ENCODE measurements at regions of chr21 and their contacts with region 1.

Region 1: GRCh38 chr21:34603002-34603709 is 11.8 kb downstream of the RCAN1 start:
- H3K4me3 Mint-ChIP-seq: no peak overlapping the region
- H3K27ac Mint-ChIP-seq: no peak overlapping the region
- H3K4me1 Mint-ChIP-seq: peaks cover 12% of the 10 kb centered on the region
- H3K27me3 Mint-ChIP-seq: no peaks in the 10 kb centered on the region

Region 2: DNA sequence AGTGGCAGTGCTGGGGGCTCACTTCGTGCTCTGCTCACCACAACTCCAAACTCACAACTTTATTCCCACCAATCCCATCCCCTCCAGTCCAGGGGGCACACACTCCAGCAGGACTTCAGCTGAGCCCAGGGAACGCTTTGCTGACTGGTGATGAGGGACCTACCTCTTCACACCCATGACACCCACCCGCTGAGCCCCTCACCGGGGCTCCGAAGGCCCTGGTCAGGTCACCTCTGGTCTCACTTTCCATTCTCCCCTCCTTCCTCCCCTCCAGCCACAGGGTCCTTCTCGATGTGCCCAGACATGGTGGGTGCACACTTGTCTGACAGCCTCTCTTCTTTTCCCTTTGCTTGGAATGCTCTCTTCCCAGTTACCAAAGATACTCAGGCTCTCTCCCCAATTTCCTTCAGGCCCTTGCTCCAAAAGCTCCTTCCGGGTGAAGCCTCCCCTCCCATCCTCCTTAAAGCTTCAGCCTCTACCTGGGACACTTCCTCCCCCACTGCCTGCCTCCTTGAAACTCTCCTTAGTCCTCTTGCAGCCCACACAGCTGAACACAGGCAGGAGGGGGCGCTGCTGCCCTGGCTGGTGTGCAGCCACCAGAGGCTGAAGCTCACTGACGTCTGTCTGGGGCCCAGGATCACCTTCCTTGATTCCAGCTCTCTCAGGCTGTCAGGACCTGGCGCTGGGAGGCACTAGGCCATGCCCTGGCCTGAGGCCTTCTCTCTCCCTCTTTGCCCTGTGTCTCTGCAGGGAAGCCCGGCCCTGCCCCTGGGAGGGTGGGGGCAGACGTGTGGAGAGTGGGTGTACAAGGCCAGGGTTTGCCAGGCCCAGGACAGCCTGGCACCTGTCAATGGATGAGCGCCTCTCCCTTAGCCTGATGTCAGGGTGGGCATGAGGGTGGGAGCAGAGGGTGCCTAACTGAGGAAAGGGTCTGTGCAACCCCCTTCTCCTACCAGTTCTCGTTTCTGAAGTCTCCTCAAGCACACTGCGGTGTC is 92.7 kb before region 1 on chr21:
- intact Hi-C with region 1: loop called (anchors 1 kb)
- H3K4me3 Mint-ChIP-seq: peak overlapping the region; percentile 77
- H3K27ac Mint-ChIP-seq: peak overlapping the region; percentile 64
- H3K4me1 Mint-ChIP-seq: peaks cover 58% of the 10 kb centered on the region
- H3K27me3 Mint-ChIP-seq: no peaks in the 10 kb centered on the region

Region 3: DNA sequence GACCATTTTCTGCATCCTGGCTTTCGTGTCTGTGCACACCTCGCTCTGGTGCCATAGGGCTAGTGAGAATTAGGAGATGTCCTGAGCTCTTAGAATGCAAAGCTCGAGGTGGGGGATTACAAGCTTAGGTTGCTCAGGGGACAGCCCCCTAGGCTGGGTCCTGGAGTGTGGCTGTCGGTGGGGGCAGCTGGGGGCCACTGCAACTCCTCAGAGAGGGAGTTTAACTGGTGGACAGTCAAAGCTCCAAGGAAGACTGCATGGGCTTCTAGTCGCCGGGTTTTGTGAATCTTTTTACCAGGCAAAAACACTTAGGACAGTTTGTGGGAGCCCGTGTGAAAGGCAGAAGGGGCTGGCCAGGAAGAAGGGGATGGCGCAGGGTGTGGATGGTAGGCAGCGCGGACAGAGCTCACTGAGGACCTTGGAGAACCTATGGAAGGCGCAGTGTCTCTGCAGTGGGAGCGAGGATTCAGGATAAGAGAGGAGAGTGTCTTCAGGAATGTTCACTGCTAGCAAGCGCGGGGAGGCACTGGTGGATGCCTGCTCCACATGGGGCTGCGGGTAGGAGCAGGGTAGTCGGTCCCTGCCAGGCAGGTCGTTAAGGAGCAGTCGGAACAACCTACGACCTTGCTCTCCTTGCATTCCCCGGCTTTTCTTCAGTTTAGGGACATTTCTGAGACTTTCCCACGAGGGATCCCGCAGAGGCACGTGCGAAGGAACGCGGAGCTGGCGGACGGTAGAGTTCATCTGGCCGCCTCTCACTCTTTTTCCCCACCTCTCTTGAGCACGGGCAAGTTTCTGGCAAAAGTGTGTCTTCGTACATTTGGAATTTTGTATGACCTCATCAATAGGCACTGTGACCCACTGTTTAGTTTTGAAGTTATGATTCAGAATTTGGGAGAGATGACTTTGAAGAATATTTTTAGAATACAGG is 78.2 kb before region 1 on chr21:
- intact Hi-C with region 1: loop called (anchors 5 kb)
- H3K4me3 Mint-ChIP-seq: no peak overlapping the region
- H3K27ac Mint-ChIP-seq: no peak overlapping the region
- H3K4me1 Mint-ChIP-seq: peaks cover 53% of the 10 kb centered on the region
- H3K27me3 Mint-ChIP-seq: no peaks in the 10 kb centered on the region

Region 4: DNA sequence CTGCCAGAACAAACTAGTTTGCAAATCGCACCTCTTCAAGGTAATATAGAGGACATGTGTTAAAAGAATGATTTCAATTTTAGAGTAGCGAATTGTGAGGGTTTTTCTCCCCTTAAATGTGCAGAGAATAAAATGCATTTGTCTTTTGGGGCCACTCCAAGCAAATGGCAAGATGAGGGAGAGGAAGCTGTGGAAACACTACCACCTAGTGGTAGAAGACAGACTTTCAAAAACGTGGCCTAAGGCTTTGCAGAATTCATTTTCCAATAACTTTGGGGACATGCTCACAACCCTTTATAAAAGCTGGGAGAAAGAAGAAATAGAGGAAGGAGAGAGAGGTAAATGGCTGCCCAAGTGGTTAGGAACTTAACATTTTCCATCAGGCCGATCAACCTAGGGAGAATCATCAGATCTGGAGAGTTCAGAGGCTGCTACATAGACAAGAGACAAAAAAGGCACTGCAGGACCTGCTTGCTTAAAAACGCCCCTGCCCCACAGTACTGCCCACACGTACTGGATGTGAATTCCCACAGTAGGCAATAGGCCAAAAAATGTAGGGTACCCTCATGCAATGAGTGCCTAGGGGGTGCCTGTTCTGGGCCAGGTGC is 27.5 kb after region 1 on chr21:
- intact Hi-C with region 1: loop called (anchors 2 kb)
- H3K4me3 Mint-ChIP-seq: no peak overlapping the region
- H3K27ac Mint-ChIP-seq: no peak overlapping the region
- H3K4me1 Mint-ChIP-seq: peaks cover 6% of the 10 kb centered on the region
- H3K27me3 Mint-ChIP-seq: peaks cover 11% of the 10 kb centered on the region

Measured in dendritic cell treated with granulocyte-macrophage colony-stimulating factor and Interleukin-4, amounts not matched to agents 40 ng/mL and 50 ng/mL, for 4 days (primary cell).